CD4-positive, alpha-beta T cell (primary cell): ENCODE measurements at regions of chr19 and their contacts with region 1.

Region 1: GRCh38 chr19:10653715-10654492 is at the start of gene ILF3:
- DNase-seq: peak; percentile 99 to 100 (median 100)
- ATAC-seq: peak; percentile 74
- H3K4me3 ChIP-seq: peak within 1 kb of the TSS; percentile 92
- H3K4me3 Mint-ChIP-seq: peak within 1 kb of the TSS; percentile 94
- H3K27ac ChIP-seq: peak within 1 kb of the TSS; percentile 99 to 100
- H3K27ac Mint-ChIP-seq: peak within 1 kb of the TSS; percentile 92
- H3K4me1 ChIP-seq: peaks cover 58% of the 10 kb centered on the region
- H3K4me1 Mint-ChIP-seq: peaks cover 52% of the 10 kb centered on the region
- H3K27me3 ChIP-seq: no peaks in the 10 kb centered on the region
- H3K27me3 Mint-ChIP-seq: peaks cover 4% of the 10 kb centered on the region
- CTCF ChIP-seq: no peak
- total RNA-seq, gene ILF3: 464 to 491 TPM

Region 2: DNA sequence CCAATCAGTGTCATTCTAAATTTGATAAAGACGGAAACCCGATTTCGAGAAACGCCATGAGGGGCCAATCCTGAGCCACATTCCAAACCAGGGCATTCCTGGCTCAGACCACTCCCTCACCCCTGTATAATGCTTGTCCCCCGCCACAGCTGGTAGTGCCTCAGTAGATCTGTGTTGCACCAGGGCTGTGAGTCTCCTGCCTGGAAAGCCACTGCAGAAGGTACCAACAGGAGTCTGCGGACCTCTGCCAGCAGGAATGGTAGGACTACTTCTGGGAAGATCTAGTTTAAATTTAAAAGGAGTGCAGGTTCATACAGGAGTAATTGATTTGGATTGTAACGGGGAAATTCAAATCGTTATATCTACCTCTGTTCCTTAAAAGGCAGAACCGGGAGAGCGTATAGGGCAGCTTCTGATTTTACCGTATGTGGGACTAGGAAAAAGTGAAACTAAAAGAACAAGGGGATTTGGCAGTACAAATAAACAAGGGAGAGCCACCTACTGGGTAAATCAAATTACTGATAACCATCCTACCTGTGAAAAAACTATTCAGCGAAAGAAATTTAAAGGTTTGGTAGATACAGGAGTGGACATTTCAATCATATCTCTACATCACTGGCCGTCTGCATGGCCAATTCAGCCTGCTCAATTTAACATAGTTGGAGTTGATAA is 1197.8 kb before region 1 on chr19:
- CTCF ChIA-PET with region 1: no interaction called
- POLR2A ChIA-PET with region 1: no interaction called
- intact Hi-C with region 1: no loop called
- DNase-seq: peak in 1 of 14 experiments; percentile 6
- ATAC-seq: no peak
- H3K4me3 ChIP-seq: no peak overlapping the region
- H3K4me3 Mint-ChIP-seq: no peak overlapping the region
- H3K27ac ChIP-seq: no peak overlapping the region
- H3K27ac Mint-ChIP-seq: no peak overlapping the region
- H3K4me1 ChIP-seq: peaks cover 2% of the 10 kb centered on the region
- H3K4me1 Mint-ChIP-seq: no peaks in the 10 kb centered on the region
- H3K27me3 ChIP-seq: no peaks in the 10 kb centered on the region
- H3K27me3 Mint-ChIP-seq: no peaks in the 10 kb centered on the region
- CTCF ChIP-seq: no peak

Region 3: GRCh38 chr19:10173257-10173926 is 480.5 kb before region 1 on chr19:
- CTCF ChIA-PET with region 1: no interaction called
- POLR2A ChIA-PET with region 1: no interaction called
- intact Hi-C with region 1: no loop called
- DNase-seq: no peak
- ATAC-seq: no peak
- H3K4me3 ChIP-seq: no peak overlapping the region
- H3K4me3 Mint-ChIP-seq: no peak overlapping the region
- H3K27ac ChIP-seq: no peak overlapping the region
- H3K27ac Mint-ChIP-seq: no peak overlapping the region
- H3K4me1 ChIP-seq: peaks cover 4% of the 10 kb centered on the region
- H3K4me1 Mint-ChIP-seq: peaks cover 3% of the 10 kb centered on the region
- H3K27me3 ChIP-seq: no peaks in the 10 kb centered on the region
- H3K27me3 Mint-ChIP-seq: no peaks in the 10 kb centered on the region
- CTCF ChIP-seq: no peak

Region 4: GRCh38 chr19:10502524-10503001 is 151.3 kb before region 1 on chr19:
- CTCF ChIA-PET with region 1: no interaction called
- POLR2A ChIA-PET with region 1: interaction called, 4 read pairs
- intact Hi-C with region 1: loop called (anchors 2 to 10 kb)
- DNase-seq: peak; percentile 75 to 94 (median 86)
- ATAC-seq: peak; percentile 93
- H3K4me3 ChIP-seq: peak overlapping the region; percentile 84
- H3K4me3 Mint-ChIP-seq: peak overlapping the region; percentile 88
- H3K27ac ChIP-seq: peak overlapping the region; percentile 67
- H3K27ac Mint-ChIP-seq: peak overlapping the region; percentile 52
- H3K4me1 ChIP-seq: peaks cover 52% of the 10 kb centered on the region
- H3K4me1 Mint-ChIP-seq: peaks cover 30% of the 10 kb centered on the region
- H3K27me3 ChIP-seq: no peaks in the 10 kb centered on the region
- H3K27me3 Mint-ChIP-seq: no peaks in the 10 kb centered on the region
- CTCF ChIP-seq: no peak

Region 5: GRCh38 chr19:10543420-10544241 is 110.3 kb before region 1 on chr19 and contains the start of gene ATG4D:
- CTCF ChIA-PET with region 1: interaction called, 3 read pairs
- POLR2A ChIA-PET with region 1: interaction called, 3 read pairs
- intact Hi-C with region 1: loop called in 1 of 2 experiments (anchors 1 kb)
- DNase-seq: peak; percentile 68 to 92 (median 80)
- ATAC-seq: peak; percentile 86
- H3K4me3 ChIP-seq: peak within 1 kb of the TSS; percentile 90
- H3K4me3 Mint-ChIP-seq: peak within 1 kb of the TSS; percentile 89
- H3K27ac ChIP-seq: peak within 1 kb of the TSS; percentile 48 to 78
- H3K27ac Mint-ChIP-seq: peak within 1 kb of the TSS; percentile 79
- H3K4me1 ChIP-seq: peaks cover 27% of the 10 kb centered on the region
- H3K4me1 Mint-ChIP-seq: peaks cover 18% of the 10 kb centered on the region
- H3K27me3 ChIP-seq: peaks cover 0 to 3% of the 10 kb centered on the region in 2 experiments
- H3K27me3 Mint-ChIP-seq: peaks cover 5% of the 10 kb centered on the region
- CTCF ChIP-seq: no peak
- total RNA-seq, gene ATG4D: 81.1 to 84.6 TPM